Common myeloid progenitor, CD34-positive (primary cell): ENCODE measurements at regions of chr17 and their contacts with region 1.

Region 1: DNA sequence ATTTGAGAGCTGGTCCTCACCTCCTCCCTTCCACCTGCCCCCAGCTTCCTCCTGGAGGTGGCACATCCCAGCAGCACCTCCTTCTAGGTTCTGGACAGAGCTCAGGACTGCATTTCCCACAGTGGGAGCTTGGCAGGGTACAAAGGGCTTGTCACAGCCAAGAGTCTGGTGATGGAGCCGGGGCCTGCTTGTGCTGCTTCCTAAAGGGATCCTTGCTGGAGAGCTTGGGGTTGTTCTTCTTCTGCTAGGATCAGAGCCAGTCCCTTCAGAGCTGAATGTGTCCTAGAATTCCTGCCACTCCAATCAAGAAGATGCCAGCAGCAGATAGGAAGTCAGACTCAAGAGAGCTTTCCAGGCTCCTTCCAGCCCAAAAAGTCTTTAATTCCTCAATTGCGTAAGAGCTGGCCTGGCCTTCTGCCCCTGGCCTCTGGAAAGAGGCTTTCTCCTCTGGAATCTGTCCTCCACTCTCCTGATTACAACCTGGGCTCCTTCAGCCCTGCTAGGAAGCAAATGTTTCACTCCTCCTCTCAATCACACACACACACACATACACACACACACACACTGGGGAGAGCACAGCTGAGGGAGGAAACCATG is 4.4 kb downstream of the CD300E start:
- DNase-seq: no peak
- H3K4me3 ChIP-seq: no peak overlapping the region
- H3K27ac ChIP-seq: no peak overlapping the region
- H3K4me1 ChIP-seq: no peaks in the 10 kb centered on the region
- H3K27me3 ChIP-seq: peaks cover 0 to 63% (median 13%) of the 10 kb centered on the region in 5 experiments

Region 2: GRCh38 chr17:74631468-74632450 is 12.6 kb after region 1 on chr17:
- CTCF ChIA-PET with region 1: interaction called, 12 read pairs
- POLR2A ChIA-PET with region 1: interaction called, 4 read pairs
- DNase-seq: peak; percentile 80 to 95 (median 93)
- H3K4me3 ChIP-seq: peak overlapping the region in 2 of 7 experiments; percentile 34 to 42
- H3K27ac ChIP-seq: no peak overlapping the region
- H3K4me1 ChIP-seq: peaks cover 4 to 23% (median 12%) of the 10 kb centered on the region in 4 experiments
- H3K27me3 ChIP-seq: peaks cover 0 to 50% (median 11%) of the 10 kb centered on the region in 5 experiments